H1 (cell line): ENCODE measurements at regions of chr5 and their contacts with region 1.

Region 1: GRCh38 chr5:17132444-17133083 is 84.9 kb upstream of the BASP1 start:
- DNase-seq: no peak
- H3K4me3 ChIP-seq: peak overlapping the region in 1 of 4 experiments; percentile 6; a peak in 1 of 8 replicates
- H3K27ac ChIP-seq: no peak overlapping the region
- H3K4me1 ChIP-seq: peaks cover 0 to 5% (median 1%) of the 10 kb centered on the region in 4 experiments; a peak in 2 of 7 replicates
- H3K27me3 ChIP-seq: no peaks in the 10 kb centered on the region
- CTCF ChIP-seq: peak in 2 of 3 experiments; percentile 24 to 49; a peak in 2 of 4 replicates
- EP300 ChIP-seq: no peak
- POLR2A ChIP-seq: no peak
- RAD21 ChIP-seq: peak; percentile 39 to 48; a peak in 3 of 4 replicates

Region 2: DNA sequence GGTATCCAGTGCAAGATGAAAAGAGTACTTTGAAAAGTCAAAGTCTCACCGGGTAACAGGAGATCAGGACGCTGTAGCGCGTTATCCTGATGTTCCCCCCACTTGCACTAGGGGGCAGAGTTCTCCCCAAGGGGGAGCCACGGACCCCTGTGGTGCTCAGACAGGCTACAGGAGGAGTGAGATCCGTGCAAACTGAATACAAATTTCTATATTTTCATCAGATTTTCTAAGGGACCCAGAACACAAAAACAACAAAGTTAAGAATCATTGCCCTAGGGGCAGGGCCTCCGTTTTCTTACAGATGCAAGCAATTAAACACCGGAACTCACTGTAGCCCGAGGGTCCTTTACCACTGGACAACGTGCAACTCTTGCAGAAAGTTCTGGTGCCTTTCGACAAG is 198.4 kb before region 1 on chr5:
- CTCF ChIA-PET with region 1: interaction called, 17 read pairs
- POLR2A ChIA-PET with region 1: no interaction called
- DNase-seq: peak; percentile 51 to 94
- H3K4me3 ChIP-seq: peak overlapping the region; percentile 35 to 97 (median 81); a peak in 5 of 8 replicates
- H3K27ac ChIP-seq: no peak overlapping the region
- H3K4me1 ChIP-seq: peaks cover 2 to 22% (median 5%) of the 10 kb centered on the region in 4 experiments; a peak in 6 of 7 replicates
- H3K27me3 ChIP-seq: peaks cover 11 to 29% (median 22%) of the 10 kb centered on the region in 4 experiments
- CTCF ChIP-seq: peak; percentile 80 to 88 (median 86)
- EP300 ChIP-seq: no peak
- POLR2A ChIP-seq: no peak
- RAD21 ChIP-seq: peak; percentile 68 to 81

Region 3: DNA sequence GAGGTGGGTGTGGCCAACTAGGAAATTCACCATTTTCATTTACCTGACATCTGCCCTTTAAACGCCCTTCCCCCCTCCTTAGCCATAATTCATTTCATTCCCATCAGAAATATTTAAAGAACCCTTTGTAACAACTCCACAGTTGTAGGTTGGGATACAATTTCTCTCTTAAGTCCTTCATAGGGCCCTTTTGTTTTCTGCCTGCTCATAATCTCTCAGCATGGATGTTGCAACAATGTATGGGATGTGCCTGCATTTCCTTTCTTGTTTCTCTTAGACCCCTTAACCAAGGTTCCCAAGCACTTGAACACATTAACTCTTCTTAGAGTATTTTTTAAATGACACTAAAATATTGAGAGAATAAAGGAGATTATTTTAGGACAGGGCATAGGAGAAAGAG is 144.8 kb before region 1 on chr5:
- CTCF ChIA-PET with region 1: no interaction called
- POLR2A ChIA-PET with region 1: no interaction called
- DNase-seq: no peak
- H3K4me3 ChIP-seq: no peak overlapping the region
- H3K27ac ChIP-seq: no peak overlapping the region
- H3K4me1 ChIP-seq: no peaks in the 10 kb centered on the region
- H3K27me3 ChIP-seq: no peaks in the 10 kb centered on the region; a peak in 1 of 7 replicates
- CTCF ChIP-seq: no peak
- EP300 ChIP-seq: no peak
- POLR2A ChIP-seq: no peak
- RAD21 ChIP-seq: no peak

Region 4: GRCh38 chr5:17056056-17056690 is 76.4 kb before region 1 on chr5:
- CTCF ChIA-PET with region 1: interaction called, 20 read pairs
- POLR2A ChIA-PET with region 1: no interaction called
- DNase-seq: no peak
- H3K4me3 ChIP-seq: no peak overlapping the region
- H3K27ac ChIP-seq: no peak overlapping the region
- H3K4me1 ChIP-seq: peaks cover 0 to 4% (median 0%) of the 10 kb centered on the region in 4 experiments; a peak in 3 of 7 replicates
- H3K27me3 ChIP-seq: no peaks in the 10 kb centered on the region
- CTCF ChIP-seq: no peak
- EP300 ChIP-seq: no peak
- POLR2A ChIP-seq: no peak
- RAD21 ChIP-seq: no peak

Region 5: DNA sequence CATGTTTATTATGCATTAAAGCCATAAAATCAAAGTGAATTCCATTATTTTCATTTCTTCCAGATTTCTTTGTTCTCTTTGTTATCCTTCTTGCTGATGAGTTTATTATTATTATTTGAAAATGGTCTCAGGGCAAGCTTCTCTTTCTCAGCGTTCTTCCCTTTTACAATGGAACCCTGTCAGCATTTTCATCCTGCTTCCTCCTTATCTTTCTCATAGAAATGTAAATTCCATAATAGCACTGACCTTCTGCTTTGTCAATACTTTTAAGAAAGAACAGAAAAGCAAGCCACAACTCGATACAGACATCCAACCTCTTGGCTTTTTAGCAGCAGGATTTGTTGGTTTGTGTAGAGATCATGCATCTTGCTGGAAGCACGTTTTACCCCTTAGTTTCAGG is 29.1 kb before region 1 on chr5:
- CTCF ChIA-PET with region 1: interaction called, 10 read pairs
- POLR2A ChIA-PET with region 1: interaction called, 3 read pairs
- DNase-seq: no peak
- H3K4me3 ChIP-seq: no peak overlapping the region
- H3K27ac ChIP-seq: no peak overlapping the region
- H3K4me1 ChIP-seq: peaks cover 0 to 3% (median 1%) of the 10 kb centered on the region in 4 experiments; a peak in 2 of 7 replicates
- H3K27me3 ChIP-seq: no peaks in the 10 kb centered on the region
- CTCF ChIP-seq: no peak
- EP300 ChIP-seq: no peak
- POLR2A ChIP-seq: no peak
- RAD21 ChIP-seq: no peak

Region 6: DNA sequence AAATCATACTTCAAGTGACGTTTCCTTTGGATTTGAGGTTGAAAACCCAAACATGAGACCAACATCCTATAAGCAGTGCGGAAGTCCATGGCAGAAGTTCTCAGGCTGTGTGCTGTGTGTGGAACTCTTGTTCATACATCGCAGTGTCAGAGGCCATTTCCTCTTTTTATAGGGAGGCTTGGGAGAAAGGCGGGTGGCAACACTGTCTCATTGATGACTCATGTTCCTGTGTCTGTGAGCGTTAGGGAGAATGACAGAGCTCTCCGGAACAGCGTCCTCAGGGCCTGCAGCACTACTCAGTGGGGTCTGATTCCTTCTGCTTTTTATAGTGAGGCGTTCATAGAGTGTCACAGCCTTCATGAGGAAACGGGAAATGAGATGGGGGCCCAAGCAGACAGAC is 13.9 kb before region 1 on chr5:
- CTCF ChIA-PET with region 1: interaction called, 38 read pairs
- POLR2A ChIA-PET with region 1: no interaction called
- DNase-seq: no peak
- H3K4me3 ChIP-seq: no peak overlapping the region
- H3K27ac ChIP-seq: no peak overlapping the region
- H3K4me1 ChIP-seq: peaks cover 1 to 9% (median 6%) of the 10 kb centered on the region in 4 experiments; a peak in 3 of 7 replicates
- H3K27me3 ChIP-seq: no peaks in the 10 kb centered on the region
- CTCF ChIP-seq: no peak
- EP300 ChIP-seq: no peak
- POLR2A ChIP-seq: no peak
- RAD21 ChIP-seq: no peak

Region 7: DNA sequence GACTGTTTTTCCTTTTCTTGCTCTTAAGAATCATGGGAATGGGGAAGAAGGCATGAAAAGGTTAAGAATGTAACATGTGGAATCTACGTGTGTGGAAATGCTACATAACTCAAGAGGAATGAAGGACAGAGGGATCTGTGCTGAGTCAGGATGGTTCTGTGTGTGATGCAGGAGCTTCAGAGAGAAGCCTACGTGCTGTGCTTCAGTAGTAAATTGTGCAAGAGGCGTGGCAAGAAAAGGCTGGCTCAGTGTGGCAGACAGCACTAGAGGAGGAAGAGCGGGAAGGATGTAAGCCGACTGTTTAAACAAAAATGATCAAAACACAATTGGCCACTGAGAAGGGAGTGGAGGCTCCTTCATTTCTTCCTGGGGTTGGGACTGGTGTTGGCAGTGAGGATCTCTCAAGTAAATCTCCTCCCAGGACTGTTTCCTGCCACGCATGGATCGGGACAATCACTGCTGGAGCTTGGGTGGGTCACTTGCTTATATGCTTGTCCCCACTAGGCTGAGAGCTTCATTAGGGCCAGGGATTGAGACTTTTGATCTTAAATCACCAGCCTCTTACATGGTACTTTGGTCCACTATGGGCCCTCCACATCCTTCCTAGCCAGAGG is 25.5 kb after region 1 on chr5:
- CTCF ChIA-PET with region 1: interaction called, 13 read pairs
- POLR2A ChIA-PET with region 1: no interaction called
- DNase-seq: no peak
- H3K4me3 ChIP-seq: no peak overlapping the region
- H3K27ac ChIP-seq: no peak overlapping the region
- H3K4me1 ChIP-seq: no peaks in the 10 kb centered on the region; a peak in 1 of 7 replicates
- H3K27me3 ChIP-seq: no peaks in the 10 kb centered on the region
- CTCF ChIP-seq: no peak
- EP300 ChIP-seq: no peak
- POLR2A ChIP-seq: no peak
- RAD21 ChIP-seq: no peak

Region 8: GRCh38 chr5:17290055-17290974 is 157.8 kb after region 1 on chr5:
- CTCF ChIA-PET with region 1: no interaction called
- POLR2A ChIA-PET with region 1: no interaction called
- DNase-seq: peak in 1 of 2 experiments; percentile 29
- H3K4me3 ChIP-seq: no peak overlapping the region
- H3K27ac ChIP-seq: no peak overlapping the region
- H3K4me1 ChIP-seq: no peaks in the 10 kb centered on the region
- H3K27me3 ChIP-seq: no peaks in the 10 kb centered on the region
- CTCF ChIP-seq: no peak
- EP300 ChIP-seq: no peak
- POLR2A ChIP-seq: no peak
- RAD21 ChIP-seq: no peak